ENCODE measurements at regions of chr1 and their contacts with region 1.

Region 1: DNA sequence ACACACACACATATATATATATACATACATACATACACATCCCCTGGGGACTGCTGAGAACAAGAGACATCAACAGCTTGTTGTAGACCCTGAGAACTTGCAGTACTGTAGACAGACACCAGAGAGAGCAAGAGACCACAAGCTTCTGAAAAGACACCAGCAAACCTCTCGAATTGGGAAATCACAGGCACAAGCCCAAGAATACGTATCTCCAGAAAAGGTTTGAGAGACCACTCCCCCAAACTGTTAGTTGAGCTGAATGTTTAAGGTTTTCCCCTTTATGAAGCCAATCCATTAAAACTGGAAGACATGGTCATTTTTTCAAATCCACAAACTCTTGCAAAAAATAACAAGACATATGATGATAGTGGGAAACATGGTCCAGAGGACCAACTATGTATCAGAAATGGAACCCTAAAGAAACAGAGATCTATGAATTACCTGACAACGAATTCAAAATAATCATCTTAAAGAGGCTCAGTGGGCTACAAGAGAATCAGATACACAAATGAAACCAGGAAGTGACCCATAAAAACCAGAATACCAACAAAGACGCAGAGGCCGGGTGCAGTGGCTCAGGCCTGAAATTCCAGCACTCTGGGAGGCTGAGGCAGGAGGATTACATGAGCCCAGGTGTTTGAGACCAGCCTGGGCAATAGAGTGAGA is 45.1 kb downstream of the SLC2A1 start:
- DNase-seq: no peak
- ATAC-seq: peak; percentile 99
- H3K4me3 Mint-ChIP-seq: no peak overlapping the region
- H3K27ac Mint-ChIP-seq: no peak overlapping the region
- H3K4me1 Mint-ChIP-seq: peaks cover 6% of the 10 kb centered on the region
- H3K27me3 Mint-ChIP-seq: no peaks in the 10 kb centered on the region
- CTCF ChIP-seq: peak; percentile 55

Region 2: GRCh38 chr1:42576935-42577334 is 336.6 kb before region 1 on chr1:
- CTCF ChIA-PET with region 1: interaction called, 3 read pairs
- POLR2A ChIA-PET with region 1: no interaction called
- intact Hi-C with region 1: loop called (anchors 1 kb)
- DNase-seq: no peak
- ATAC-seq: no peak
- H3K4me3 Mint-ChIP-seq: no peak overlapping the region
- H3K27ac Mint-ChIP-seq: no peak overlapping the region
- H3K4me1 Mint-ChIP-seq: no peaks in the 10 kb centered on the region
- H3K27me3 Mint-ChIP-seq: no peaks in the 10 kb centered on the region
- CTCF ChIP-seq: no peak

Region 3: GRCh38 chr1:42777852-42778251 is 135.7 kb before region 1 on chr1:
- CTCF ChIA-PET with region 1: interaction called, 24 read pairs
- POLR2A ChIA-PET with region 1: no interaction called
- intact Hi-C with region 1: loop called (anchors 1 kb)
- DNase-seq: no peak
- ATAC-seq: peak; percentile 71
- H3K4me3 Mint-ChIP-seq: no peak overlapping the region
- H3K27ac Mint-ChIP-seq: no peak overlapping the region
- H3K4me1 Mint-ChIP-seq: peaks cover 4% of the 10 kb centered on the region
- H3K27me3 Mint-ChIP-seq: no peaks in the 10 kb centered on the region
- CTCF ChIP-seq: no peak

Region 4: DNA sequence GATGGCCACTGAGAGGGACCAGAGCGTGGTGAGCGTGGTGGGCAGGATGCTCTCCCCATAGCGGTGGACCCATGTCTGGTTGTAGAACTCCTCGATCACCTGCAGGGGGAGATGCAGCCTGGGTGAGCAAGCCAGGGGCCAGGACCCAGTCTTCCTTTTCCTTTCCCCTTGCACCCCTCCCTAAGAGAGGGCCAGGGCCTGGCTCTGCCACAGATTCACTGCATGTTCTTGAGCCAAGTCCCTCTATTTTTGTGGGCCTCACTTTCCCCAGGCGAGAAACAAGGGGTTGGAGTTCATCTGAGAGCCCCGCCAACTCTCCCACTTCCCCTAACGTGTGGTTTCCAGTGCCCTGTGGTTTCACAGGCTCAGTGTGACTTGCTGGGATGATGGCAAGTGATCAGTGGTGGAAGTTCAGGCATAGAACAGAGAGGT is 17.6 kb after region 1 on chr1:
- CTCF ChIA-PET with region 1: interaction called, 8 read pairs
- POLR2A ChIA-PET with region 1: interaction called, 3 read pairs
- intact Hi-C with region 1: loop called (anchors 1 kb)
- DNase-seq: peak; percentile 47
- ATAC-seq: peak; percentile 16
- H3K4me3 Mint-ChIP-seq: peak overlapping the region; percentile 69
- H3K27ac Mint-ChIP-seq: peak overlapping the region; percentile 91
- H3K4me1 Mint-ChIP-seq: peaks cover 75% of the 10 kb centered on the region
- H3K27me3 Mint-ChIP-seq: no peaks in the 10 kb centered on the region
- CTCF ChIP-seq: no peak

Region 5: DNA sequence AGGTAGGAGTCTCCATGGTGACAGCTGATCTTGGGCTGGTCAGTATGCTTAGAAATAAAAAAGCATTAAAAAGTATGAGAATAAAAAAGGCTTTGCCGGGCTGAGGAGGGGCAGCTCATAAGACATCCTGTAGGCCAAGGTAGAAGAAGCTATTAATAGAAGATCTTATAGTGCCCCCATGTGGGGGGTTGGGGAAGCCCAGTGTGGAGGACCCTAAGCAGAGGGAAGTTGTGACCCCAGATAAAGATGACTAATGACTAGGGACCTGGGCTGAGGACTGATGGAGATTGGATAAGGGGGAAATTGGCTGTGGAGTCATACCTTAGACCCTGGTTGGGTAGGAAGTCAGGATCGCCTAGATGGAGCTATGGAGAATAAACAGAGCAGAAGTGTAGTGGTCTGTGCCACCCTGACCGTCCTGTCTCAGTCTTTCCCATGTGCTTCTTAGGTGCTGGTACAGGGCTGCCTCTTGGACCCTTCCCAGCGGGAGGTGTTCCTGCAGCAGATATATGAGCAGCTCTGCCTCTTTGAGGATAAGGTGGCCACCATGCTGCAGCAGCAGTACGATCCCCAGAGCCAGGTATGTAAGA is 501.2 kb after region 1 on chr1:
- CTCF ChIA-PET with region 1: interaction called, 13 read pairs
- POLR2A ChIA-PET with region 1: no interaction called
- intact Hi-C with region 1: no loop called
- DNase-seq: peak; percentile 31
- ATAC-seq: peak; percentile 96
- H3K4me3 Mint-ChIP-seq: no peak overlapping the region
- H3K27ac Mint-ChIP-seq: no peak overlapping the region
- H3K4me1 Mint-ChIP-seq: no peaks in the 10 kb centered on the region
- H3K27me3 Mint-ChIP-seq: no peaks in the 10 kb centered on the region
- CTCF ChIP-seq: peak; percentile 19